Thyroid gland (tissue), 4 donors: ENCODE measurements at regions of chr17 and their contacts with region 1.

Region 1: GRCh38 chr17:61208301-61209105 is 191.1 kb upstream of the TBX2 start:
- DNase-seq: peak; percentile 65 to 70
- H3K4me3 ChIP-seq: no peak overlapping the region
- H3K27ac ChIP-seq: peak overlapping the region; percentile 81 to 92 (median 91)
- H3K4me1 ChIP-seq: peaks cover 46 to 58% of the 10 kb centered on the region in 2 donors
- H3K27me3 ChIP-seq: no peaks in the 10 kb centered on the region
- CTCF ChIP-seq: peak in 1 of 6 experiments; percentile 5
- POLR2A ChIP-seq: no peak

Region 2: DNA sequence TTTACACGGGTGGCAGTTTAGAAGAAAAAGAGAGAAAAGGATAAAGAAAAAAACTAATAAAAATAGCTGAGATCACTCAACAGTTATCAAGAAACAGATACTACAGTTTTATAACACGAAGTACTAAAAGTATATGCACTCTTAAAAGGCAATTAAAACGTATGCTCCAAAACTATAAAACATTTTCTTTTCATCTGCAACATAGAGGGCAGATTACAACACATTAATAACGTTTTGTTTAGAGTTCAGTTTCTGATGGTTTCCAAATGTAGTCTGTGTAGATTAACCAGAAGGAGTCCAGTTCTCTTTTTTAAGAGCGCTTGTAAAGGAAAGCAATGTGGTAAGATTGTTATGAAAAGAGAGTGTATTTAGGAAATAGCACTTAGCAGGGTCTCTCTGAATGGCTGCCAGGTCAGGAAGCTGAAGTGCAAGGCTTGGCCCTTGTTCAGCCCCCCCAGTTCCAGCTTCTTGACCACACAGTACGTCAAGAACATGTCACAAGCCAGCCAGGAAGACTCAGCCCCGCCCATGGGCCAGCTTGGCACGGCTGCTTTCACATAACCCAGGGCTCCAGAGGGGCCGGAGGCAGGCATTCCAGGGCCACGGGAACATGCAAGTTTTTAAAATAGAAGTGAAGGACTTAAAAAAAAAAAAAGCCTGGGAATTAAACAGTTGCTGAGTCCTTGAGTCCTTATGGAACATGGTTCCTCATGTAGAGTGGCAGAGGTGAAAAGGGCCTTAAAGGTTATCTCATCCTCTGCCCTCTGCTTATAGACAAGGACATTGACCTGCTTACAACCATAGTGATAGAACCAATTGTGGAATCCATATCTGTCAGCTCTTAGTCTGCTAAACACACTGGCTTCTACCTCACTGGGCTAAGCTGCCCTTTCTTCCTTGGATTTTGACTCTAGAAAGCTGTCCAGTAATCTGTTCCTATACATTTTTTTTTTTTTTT is 43.7 kb after region 1 on chr17:
- intact Hi-C with region 1: loop called (anchors 5 kb)
- DNase-seq: peak; percentile 99 to 100
- H3K4me3 ChIP-seq: no peak overlapping the region
- H3K27ac ChIP-seq: peak overlapping the region; percentile 74 to 88 (median 88)
- H3K4me1 ChIP-seq: peaks cover 74 to 79% of the 10 kb centered on the region in 2 donors
- H3K27me3 ChIP-seq: no peaks in the 10 kb centered on the region
- CTCF ChIP-seq: no peak
- POLR2A ChIP-seq: peak in 1 of 2 donors; percentile 31

Region 3: GRCh38 chr17:61399131-61400057 is 190.9 kb after region 1 on chr17 and contains the start of gene TBX2:
- intact Hi-C with region 1: loop called (anchors 5 kb)
- DNase-seq: peak; percentile 57 to 61
- H3K4me3 ChIP-seq: peak within 1 kb of the TSS; percentile 35 to 73 (median 37)
- H3K27ac ChIP-seq: peak within 1 kb of the TSS; percentile 87 to 95 (median 91)
- H3K4me1 ChIP-seq: peaks cover 20 to 59% of the 10 kb centered on the region in 2 donors
- H3K27me3 ChIP-seq: peaks cover 37% of the 10 kb centered on the region
- CTCF ChIP-seq: no peak
- POLR2A ChIP-seq: peak in 1 of 2 donors; percentile 42
- total RNA-seq, gene TBX2: 5.3 to 20.2 (median 11.0) TPM